GM12878 (cell line): ENCODE measurements at regions of chr7 and their contacts with region 1.

Region 1: GRCh38 chr7:48255046-48255445 is 83.8 kb downstream of the ABCA13 start:
- DNase-seq: peak; percentile 7
- ATAC-seq: peak; percentile 76
- H3K4me3 ChIP-seq: no peak overlapping the region
- H3K27ac ChIP-seq: no peak overlapping the region
- H3K4me1 ChIP-seq: peaks cover 7% of the 10 kb centered on the region; the same call in 1 of the 2 replicates
- H3K27me3 ChIP-seq: no peaks in the 10 kb centered on the region
- CTCF ChIP-seq: no peak
- EP300 ChIP-seq: no peak; a peak in 1 of 4 replicates
- POLR2A ChIP-seq: no peak
- RAD21 ChIP-seq: no peak

Region 2: GRCh38 chr7:47937065-47937683 is 317.9 kb before region 1 on chr7:
- CTCF ChIA-PET with region 1: no interaction called
- POLR2A ChIA-PET with region 1: no interaction called
- RAD21 ChIA-PET with region 1: no interaction called
- SMC1A ChIA-PET with region 1: no interaction called
- in situ Hi-C with region 1: no loop called
- intact Hi-C with region 1: loop called (anchors 5 kb)
- DNase-seq: peak; percentile 91
- ATAC-seq: peak; percentile 98
- H3K4me3 ChIP-seq: peak overlapping the region; percentile 9; the same call in 1 of the 2 replicates
- H3K27ac ChIP-seq: peak overlapping the region; percentile 68
- H3K4me1 ChIP-seq: peaks cover 28% of the 10 kb centered on the region
- H3K27me3 ChIP-seq: peaks cover 0 to 1% of the 10 kb centered on the region in 2 experiments; a peak in 2 of 4 replicates
- CTCF ChIP-seq: no peak
- EP300 ChIP-seq: peak; percentile 94 to 98
- POLR2A ChIP-seq: peak; percentile 58; the same call in 1 of the 2 replicates
- RAD21 ChIP-seq: no peak